ENCODE measurements at regions of chr17 and their contacts with region 1.

Region 1: GRCh38 chr17:59521204-59522126 is 43.9 kb upstream of the DHX40 start:
- DNase-seq: peak; percentile 32
- H3K4me3 Mint-ChIP-seq: no peak overlapping the region
- H3K27ac Mint-ChIP-seq: no peak overlapping the region
- H3K4me1 Mint-ChIP-seq: peaks cover 6% of the 10 kb centered on the region
- H3K27me3 Mint-ChIP-seq: peaks cover 18% of the 10 kb centered on the region

Region 2: DNA sequence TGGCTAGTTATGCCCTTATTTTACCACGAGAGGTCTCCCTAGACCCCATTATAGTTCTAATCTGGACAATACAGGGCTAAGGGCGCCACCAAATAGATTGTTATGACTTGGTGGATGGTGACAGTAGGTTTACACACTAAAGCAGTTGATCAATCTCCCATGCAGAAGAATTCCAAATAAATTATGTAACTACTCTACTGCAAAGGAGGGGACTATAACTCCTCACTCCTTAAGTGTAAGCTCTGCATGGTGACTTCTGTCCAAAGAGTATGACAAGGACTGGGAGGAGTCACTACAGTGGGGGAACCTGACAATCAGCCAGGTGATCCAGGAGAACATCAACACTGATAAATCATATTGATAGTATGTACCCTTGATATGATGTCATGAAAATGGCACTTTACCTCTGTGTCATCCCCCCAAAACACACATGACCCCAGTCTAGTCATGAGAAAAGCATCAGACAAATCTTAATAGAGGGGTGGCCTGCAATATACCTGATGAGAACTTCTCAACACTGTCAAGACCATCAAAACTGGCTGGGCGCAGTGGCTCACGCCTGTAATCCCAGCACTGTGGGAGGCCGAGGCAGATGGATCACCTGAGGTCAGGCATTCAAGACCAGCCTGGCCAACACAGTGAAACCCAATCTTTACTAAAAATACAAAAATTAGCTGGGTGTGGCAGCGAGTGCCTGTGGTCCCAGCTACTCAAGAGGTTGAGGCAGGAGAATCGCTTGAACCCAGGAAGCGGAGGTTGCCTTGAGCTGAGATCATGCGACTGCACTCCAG is 210.1 kb before region 1 on chr17:
- intact Hi-C with region 1: loop called (anchors 5 kb)
- DNase-seq: peak; percentile 33
- H3K4me3 Mint-ChIP-seq: no peak overlapping the region
- H3K27ac Mint-ChIP-seq: no peak overlapping the region
- H3K4me1 Mint-ChIP-seq: peaks cover 3% of the 10 kb centered on the region
- H3K27me3 Mint-ChIP-seq: no peaks in the 10 kb centered on the region

Measured in activated T-helper 2 cell treated with anti-CD3 and anti-CD28 coated beads, Interferon-gamma antibody, Interleukin-2, Interleukin-4, amounts not matched to agents 10 μg/mL and 5 μg/mL and 100 μg/mL, durations not matched to agents 14 hours and 24 hours and 36 hours (primary cell).